ENCODE measurements at regions of chr7 and their contacts with region 1.

Region 1: DNA sequence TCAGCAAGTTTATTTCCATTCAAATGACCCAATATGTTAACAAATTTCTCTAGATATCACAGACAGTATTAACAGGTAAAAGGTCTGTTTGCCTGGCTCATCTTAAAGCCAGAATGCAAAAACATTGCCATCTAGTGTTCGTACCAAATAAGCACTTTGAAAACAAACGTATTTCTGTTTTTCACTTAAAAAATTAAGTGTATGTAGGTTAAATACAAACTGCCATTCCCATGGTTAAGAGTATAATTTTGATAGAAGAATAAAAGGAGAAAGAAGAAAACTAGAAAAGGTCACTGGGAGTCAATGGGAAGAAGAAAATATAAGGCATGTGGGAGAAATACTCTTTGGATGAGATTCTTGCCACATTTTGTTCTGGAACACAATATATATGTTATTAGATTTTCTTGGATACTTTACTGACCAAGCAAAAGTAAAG is 51.0 kb downstream of the ORC5 start:
- DNase-seq: no peak
- H3K4me3 Mint-ChIP-seq: no peak overlapping the region
- H3K27ac Mint-ChIP-seq: no peak overlapping the region
- H3K4me1 Mint-ChIP-seq: no peaks in the 10 kb centered on the region
- H3K27me3 Mint-ChIP-seq: no peaks in the 10 kb centered on the region
- CTCF ChIP-seq: no peak

Region 2: DNA sequence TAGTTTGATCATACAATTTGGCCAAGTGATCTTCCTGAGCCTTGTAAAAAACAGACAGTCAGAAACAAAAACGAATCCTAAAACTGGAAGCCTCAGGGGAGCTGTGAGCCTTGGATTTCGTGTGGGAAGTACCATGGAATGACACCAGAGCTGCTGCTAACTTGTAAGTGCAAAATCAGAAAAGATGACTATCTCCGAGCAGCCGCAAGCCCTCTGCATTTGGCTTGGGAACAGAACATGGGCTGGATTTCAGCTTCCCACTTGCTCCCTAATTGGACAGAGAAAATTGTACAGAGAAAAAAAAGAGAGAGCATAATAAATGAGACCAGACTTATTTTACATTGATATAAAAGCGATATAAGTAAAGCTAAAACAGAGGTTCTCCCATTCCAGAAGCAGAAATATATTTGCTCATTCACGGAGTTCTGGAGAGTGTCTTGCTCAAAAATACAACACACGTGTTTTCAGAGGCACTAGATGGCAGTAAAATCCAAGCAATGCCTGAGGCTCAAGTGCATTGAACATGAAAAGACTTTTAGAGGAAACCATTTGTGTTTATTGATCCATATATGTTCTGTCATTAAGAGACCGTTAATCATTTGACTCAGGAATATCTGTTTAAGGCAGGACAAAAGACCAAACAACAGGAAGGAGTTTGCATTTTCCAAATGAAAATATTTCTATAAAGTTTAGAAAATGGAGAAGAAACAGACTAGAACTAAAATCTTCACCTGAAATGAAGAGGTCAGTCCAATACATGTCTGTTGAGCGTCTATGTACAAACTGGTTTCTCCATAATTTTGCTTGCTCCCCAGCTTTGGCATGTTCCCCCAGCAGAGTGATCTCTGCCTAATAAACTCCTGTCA is 632.6 kb before region 1 on chr7:
- CTCF ChIA-PET with region 1: no interaction called
- intact Hi-C with region 1: loop called (anchors 2 kb)
- DNase-seq: no peak
- H3K4me3 Mint-ChIP-seq: no peak overlapping the region
- H3K27ac Mint-ChIP-seq: no peak overlapping the region
- H3K4me1 Mint-ChIP-seq: no peaks in the 10 kb centered on the region
- H3K27me3 Mint-ChIP-seq: no peaks in the 10 kb centered on the region
- CTCF ChIP-seq: peak; percentile 21

Region 3: DNA sequence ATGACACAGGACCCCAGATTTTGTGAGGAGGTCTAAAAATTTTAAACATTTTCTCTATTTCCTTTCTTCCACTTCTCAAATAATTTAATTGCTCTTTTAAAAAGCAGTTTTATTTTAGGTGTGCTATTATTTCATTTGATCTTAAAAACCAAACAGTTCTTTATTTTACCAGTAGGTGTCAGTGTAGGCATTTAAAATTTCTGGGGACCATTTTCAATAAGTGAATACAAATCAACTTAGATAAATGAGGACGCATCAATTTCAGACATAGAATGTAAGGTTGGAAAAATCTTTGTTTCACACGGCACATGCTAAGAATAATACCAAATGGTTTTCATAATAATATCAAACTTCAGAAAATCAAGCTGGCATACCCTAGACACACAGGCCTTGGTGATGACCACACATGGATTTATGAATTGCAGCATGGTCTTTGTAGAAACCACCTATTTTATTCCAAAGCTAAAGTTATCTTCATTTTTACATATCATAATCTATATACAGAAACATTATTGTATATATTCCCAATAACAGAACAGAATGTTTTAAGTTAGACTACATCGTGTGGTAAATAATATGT is 583.3 kb before region 1 on chr7:
- CTCF ChIA-PET with region 1: no interaction called
- intact Hi-C with region 1: loop called (anchors 5 kb)
- DNase-seq: no peak
- H3K4me3 Mint-ChIP-seq: no peak overlapping the region
- H3K27ac Mint-ChIP-seq: no peak overlapping the region
- H3K4me1 Mint-ChIP-seq: no peaks in the 10 kb centered on the region
- H3K27me3 Mint-ChIP-seq: no peaks in the 10 kb centered on the region
- CTCF ChIP-seq: no peak

Region 4: GRCh38 chr7:103752997-103753396 is 403.9 kb before region 1 on chr7:
- CTCF ChIA-PET with region 1: no interaction called
- intact Hi-C with region 1: loop called (anchors 2 kb)
- DNase-seq: peak; percentile 17
- H3K4me3 Mint-ChIP-seq: no peak overlapping the region
- H3K27ac Mint-ChIP-seq: no peak overlapping the region
- H3K4me1 Mint-ChIP-seq: no peaks in the 10 kb centered on the region
- H3K27me3 Mint-ChIP-seq: no peaks in the 10 kb centered on the region
- CTCF ChIP-seq: no peak

Region 5: DNA sequence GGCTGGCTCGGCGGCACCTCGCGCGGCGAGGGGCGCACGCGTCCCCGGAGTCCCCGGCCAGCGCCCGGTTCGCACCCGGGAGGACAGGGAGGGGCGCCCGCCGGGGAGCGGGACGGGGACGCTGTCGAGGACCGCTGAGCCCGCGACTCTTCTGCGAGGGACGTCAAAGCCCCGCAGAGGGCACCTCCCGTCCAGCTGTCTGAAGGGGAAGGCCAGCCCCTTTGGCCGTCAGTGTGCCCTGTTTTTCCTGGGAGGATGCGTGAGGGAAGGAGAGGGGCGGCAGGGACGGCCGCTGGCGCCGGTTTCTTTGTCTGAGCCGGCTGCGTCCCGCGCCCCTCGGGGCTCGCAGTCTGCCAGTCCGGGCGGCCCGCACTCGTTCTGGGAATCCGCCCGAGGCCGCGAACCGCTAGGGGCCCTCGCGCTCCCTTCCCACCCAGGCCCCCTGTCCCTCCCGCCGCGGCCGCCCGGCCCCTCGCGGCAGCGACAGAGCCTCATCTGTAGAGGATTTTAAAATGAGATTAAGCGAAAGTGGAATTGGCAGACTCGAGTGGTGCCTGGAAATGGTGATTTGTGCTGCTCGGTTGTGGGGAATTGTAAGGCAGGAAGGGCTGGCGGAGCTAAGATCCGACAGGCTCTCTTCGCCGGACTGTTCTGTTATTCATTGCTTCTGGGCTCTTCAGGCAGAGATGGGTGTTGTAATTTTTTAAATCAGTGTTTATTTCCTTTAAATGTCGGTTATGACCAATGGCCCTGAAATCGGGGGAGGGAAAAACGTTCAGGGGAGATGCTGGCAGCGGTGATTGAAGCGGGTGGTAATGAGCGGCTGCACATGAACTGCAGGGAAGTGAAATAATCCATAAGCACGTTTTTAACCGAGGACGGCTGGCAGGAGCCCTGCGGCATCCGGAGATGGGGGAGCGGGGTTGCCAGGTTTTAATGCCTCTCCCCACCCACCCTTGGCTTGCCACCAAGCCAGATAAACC is 166.8 kb before region 1 on chr7:
- CTCF ChIA-PET with region 1: no interaction called
- intact Hi-C with region 1: loop called (anchors 10 kb)
- DNase-seq: peak; percentile 44
- H3K4me3 Mint-ChIP-seq: peak overlapping the region; percentile 74
- H3K27ac Mint-ChIP-seq: no peak overlapping the region
- H3K4me1 Mint-ChIP-seq: peaks cover 7% of the 10 kb centered on the region
- H3K27me3 Mint-ChIP-seq: no peaks in the 10 kb centered on the region
- CTCF ChIP-seq: no peak

Region 6: GRCh38 chr7:104106108-104106905 is 50.6 kb before region 1 on chr7:
- CTCF ChIA-PET with region 1: no interaction called
- intact Hi-C with region 1: loop called (anchors 1 kb)
- DNase-seq: no peak
- H3K4me3 Mint-ChIP-seq: no peak overlapping the region
- H3K27ac Mint-ChIP-seq: no peak overlapping the region
- H3K4me1 Mint-ChIP-seq: no peaks in the 10 kb centered on the region
- H3K27me3 Mint-ChIP-seq: peaks cover 18% of the 10 kb centered on the region
- CTCF ChIP-seq: no peak

Region 7: GRCh38 chr7:104137971-104138370 is 18.9 kb before region 1 on chr7:
- CTCF ChIA-PET with region 1: no interaction called
- intact Hi-C with region 1: no loop called
- DNase-seq: no peak
- H3K4me3 Mint-ChIP-seq: no peak overlapping the region
- H3K27ac Mint-ChIP-seq: no peak overlapping the region
- H3K4me1 Mint-ChIP-seq: no peaks in the 10 kb centered on the region
- H3K27me3 Mint-ChIP-seq: no peaks in the 10 kb centered on the region
- CTCF ChIP-seq: no peak

Region 8: GRCh38 chr7:104207731-104208420 is 51.0 kb after region 1 on chr7 and contains the start of gene ORC5:
- CTCF ChIA-PET with region 1: no interaction called
- intact Hi-C with region 1: no loop called
- DNase-seq: peak; percentile 69
- H3K4me3 Mint-ChIP-seq: peak within 1 kb of the TSS; percentile 97
- H3K27ac Mint-ChIP-seq: peak within 1 kb of the TSS; percentile 85
- H3K4me1 Mint-ChIP-seq: peaks cover 9% of the 10 kb centered on the region
- H3K27me3 Mint-ChIP-seq: peaks cover 26% of the 10 kb centered on the region
- CTCF ChIP-seq: no peak
- total RNA-seq, gene ORC5: 16.8 and 20.2 TPM in 2 replicates

Measured in Calu3 (cell line).